Brain microvascular endothelial cell (primary cell): ENCODE measurements at regions of chr6 and their contacts with region 1.

Region 1: GRCh38 chr6:100464903-100465700 is at the start of gene SIM1:
- DNase-seq: peak; percentile 43
- H3K4me3 ChIP-seq: peak within 1 kb of the TSS; percentile 40
- H3K27ac ChIP-seq: no peak within 1 kb of the TSS
- H3K27me3 ChIP-seq: peaks cover 95% of the 10 kb centered on the region
- CTCF ChIP-seq: no peak

Region 2: DNA sequence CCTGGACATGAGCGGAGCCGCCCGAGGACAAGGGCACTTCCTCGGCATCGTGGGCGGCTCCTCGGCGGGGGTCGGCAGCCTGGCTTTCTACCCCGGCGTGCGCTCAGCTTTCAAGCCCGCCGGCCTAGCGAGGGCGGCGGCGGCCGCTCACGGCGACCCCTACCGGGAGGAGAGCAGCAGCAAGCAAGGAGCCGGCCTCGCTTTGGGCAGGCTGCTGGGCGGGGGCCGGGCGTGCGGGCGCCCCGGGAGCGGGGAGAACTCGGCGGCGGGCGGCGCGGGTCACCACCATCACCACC is 851.7 kb before region 1 on chr6:
- in situ Hi-C with region 1: loop called (anchors 25 kb)
- DNase-seq: no peak
- H3K4me3 ChIP-seq: peak overlapping the region; percentile 5
- H3K27ac ChIP-seq: no peak overlapping the region
- H3K27me3 ChIP-seq: peaks cover 99% of the 10 kb centered on the region
- CTCF ChIP-seq: peak; percentile 60